Activated B cell treated with CpG ODN at 0.5 μM for 24 hours (primary cell): ENCODE measurements at regions of chr10 and their contacts with region 1.

Region 1: DNA sequence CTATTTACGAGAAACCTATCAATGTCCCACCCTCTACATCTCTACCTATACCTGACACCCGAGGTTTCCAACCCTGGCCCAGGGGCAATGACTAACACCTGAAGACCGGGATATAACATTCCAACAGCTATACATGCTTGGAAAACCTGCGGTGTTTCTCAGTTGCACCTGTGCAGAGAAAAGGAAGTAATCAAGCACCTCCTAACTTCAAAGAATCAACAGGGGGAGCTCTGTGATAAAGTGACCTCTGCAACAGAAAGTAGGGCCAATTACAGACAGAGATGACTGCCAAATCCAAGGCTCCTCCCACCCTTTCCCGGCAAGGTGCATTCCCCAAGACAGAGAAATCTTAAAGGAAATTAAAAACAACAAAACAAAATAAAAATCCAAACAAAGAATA is 41.3 kb downstream of the CCDC6 start:
- DNase-seq: no peak
- ATAC-seq: peak; percentile 76
- H3K4me3 Mint-ChIP-seq: no peak overlapping the region
- H3K27ac Mint-ChIP-seq: peak overlapping the region; percentile 82
- H3K4me1 Mint-ChIP-seq: peaks cover 69% of the 10 kb centered on the region
- H3K27me3 Mint-ChIP-seq: no peaks in the 10 kb centered on the region
- CTCF ChIP-seq: no peak

Region 2: DNA sequence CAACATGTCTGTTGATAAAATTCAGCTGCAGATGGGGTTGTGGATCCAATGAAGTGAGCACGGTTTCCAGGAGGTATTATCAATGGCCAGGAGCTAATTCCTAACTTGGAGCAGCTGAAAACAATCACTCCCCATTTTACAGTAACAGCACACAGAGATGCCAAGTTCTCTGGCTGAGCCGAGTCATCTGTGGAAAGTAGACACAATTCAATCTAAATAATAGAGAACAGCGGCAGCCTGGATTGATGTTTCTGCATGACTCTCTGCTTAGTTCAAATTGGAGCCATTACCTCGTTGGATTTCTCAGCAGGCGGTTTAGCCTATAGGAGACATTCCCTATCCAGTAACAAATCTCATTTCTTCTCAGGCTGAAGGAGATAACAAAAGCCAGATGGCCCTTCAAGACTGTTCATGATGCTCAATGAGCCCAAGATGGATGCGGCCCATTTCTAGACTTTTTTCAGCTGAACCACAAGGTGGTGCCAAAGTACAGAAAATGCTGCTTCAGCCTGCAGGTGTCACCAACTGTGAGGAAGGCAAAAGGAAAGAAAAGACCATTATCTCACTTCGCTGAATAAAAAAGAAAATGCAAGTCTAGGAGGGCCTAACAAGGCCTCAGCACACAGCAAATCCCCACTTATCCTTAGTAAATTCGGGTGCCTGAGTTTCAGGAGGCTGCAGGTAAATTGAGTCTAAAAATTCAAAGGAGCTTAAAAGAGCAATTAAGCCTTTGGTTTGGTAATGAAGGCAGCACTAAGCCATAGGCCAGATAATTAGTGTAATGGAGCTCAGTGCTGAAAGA is 239.2 kb before region 1 on chr10:
- CTCF ChIA-PET with region 1: interaction called, 6 read pairs
- POLR2A ChIA-PET with region 1: no interaction called
- intact Hi-C with region 1: loop called (anchors 1 kb)
- DNase-seq: no peak
- ATAC-seq: peak; percentile 85
- H3K4me3 Mint-ChIP-seq: no peak overlapping the region
- H3K27ac Mint-ChIP-seq: no peak overlapping the region
- H3K4me1 Mint-ChIP-seq: peaks cover 3% of the 10 kb centered on the region
- H3K27me3 Mint-ChIP-seq: no peaks in the 10 kb centered on the region
- CTCF ChIP-seq: peak; percentile 42

Region 3: GRCh38 chr10:59830601-59831259 is 34.4 kb before region 1 on chr10:
- CTCF ChIA-PET with region 1: interaction called, 8 read pairs
- POLR2A ChIA-PET with region 1: interaction called, 4 read pairs
- intact Hi-C with region 1: loop called (anchors 2 kb)
- DNase-seq: no peak
- ATAC-seq: peak; percentile 50
- H3K4me3 Mint-ChIP-seq: no peak overlapping the region
- H3K27ac Mint-ChIP-seq: no peak overlapping the region
- H3K4me1 Mint-ChIP-seq: peaks cover 69% of the 10 kb centered on the region
- H3K27me3 Mint-ChIP-seq: no peaks in the 10 kb centered on the region
- CTCF ChIP-seq: peak; percentile 21

Region 4: DNA sequence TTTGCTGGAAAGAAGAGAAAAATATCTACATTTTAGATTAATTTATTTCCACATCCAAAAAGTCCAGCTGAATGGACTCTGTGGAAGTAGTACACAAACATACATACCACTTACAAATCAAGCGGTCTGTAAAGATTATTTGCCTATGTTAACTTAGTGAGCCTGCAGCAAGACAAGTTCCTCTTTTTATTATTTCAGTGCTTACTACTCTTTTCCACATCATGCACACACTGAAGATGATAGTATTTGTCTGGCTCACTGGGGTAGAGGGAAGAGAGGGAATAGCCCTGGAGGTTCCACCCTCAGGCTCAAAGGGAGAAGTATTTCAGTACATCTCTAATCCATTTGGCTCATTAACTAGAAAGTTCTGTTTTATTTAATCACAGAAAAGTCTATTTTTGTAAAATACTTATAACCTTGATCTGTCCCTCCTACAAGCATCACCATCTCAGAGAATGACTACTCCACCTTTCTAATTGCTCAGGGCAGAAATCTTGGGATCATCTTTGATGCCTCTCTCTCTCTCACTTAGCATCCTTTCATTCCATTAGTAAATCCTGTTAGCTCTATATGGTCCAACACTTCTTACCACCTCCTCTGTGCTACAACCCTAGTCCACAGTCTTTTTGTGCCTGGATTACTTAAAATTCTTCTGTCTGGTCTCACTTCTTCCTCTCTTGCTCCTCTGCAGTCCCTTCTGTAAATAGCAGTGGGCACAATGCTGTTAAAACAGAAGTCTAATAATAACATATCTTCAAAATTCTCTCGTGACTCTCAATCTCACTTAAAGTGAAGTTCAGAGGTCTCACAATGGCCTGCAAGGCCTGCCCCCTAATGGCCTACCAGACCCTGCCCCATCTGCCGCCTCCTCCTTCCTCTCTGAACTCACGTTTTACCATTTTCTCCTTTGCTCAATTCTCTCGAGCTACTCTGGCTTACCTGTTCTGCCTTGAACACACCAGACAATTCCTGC is 105.6 kb after region 1 on chr10:
- CTCF ChIA-PET with region 1: interaction called, 11 read pairs
- POLR2A ChIA-PET with region 1: no interaction called
- intact Hi-C with region 1: loop called (anchors 2 kb)
- DNase-seq: no peak
- ATAC-seq: peak; percentile 83
- H3K4me3 Mint-ChIP-seq: no peak overlapping the region
- H3K27ac Mint-ChIP-seq: no peak overlapping the region
- H3K4me1 Mint-ChIP-seq: peaks cover 5% of the 10 kb centered on the region
- H3K27me3 Mint-ChIP-seq: no peaks in the 10 kb centered on the region
- CTCF ChIP-seq: no peak

Region 5: DNA sequence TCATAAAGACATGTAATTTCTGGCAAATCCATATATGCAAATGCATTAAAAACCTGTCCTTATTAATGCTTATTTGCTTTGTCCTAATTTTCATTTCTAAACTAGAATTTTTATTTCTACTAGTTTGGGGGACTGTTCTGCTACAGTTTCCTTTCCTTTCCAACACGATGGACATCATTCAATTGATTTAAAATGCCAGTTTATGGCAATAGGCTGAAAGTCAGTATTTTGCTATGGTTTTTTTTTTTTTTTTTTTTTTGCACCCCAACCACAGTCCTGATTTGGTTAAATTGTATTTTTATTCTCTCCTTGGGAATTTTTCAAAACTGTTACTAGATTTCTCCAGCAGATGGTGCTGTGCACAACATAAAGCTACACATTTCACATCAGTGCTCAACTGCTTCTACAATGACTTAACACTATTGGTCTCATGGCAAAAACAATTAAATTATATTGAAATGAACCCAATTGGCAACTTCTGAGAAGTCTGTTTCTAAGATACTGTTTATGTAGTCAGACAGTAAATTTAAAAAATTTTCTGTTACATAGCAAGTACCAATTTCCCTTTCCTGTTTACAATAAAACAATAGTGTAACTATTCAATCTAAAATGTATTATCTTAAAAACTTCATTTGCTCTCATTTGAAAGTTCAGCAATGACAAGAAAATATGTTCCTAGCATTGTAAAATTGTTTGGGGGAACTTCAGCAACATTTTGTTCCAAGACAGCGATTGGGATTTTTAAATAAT is 235.1 kb after region 1 on chr10:
- CTCF ChIA-PET with region 1: interaction called, 4 read pairs
- POLR2A ChIA-PET with region 1: no interaction called
- intact Hi-C with region 1: loop called (anchors 1 kb)
- DNase-seq: no peak
- ATAC-seq: no peak
- H3K4me3 Mint-ChIP-seq: no peak overlapping the region
- H3K27ac Mint-ChIP-seq: no peak overlapping the region
- H3K4me1 Mint-ChIP-seq: no peaks in the 10 kb centered on the region
- H3K27me3 Mint-ChIP-seq: no peaks in the 10 kb centered on the region
- CTCF ChIP-seq: peak; percentile 70

Region 6: GRCh38 chr10:60521974-60522405 is 656.9 kb after region 1 on chr10:
- CTCF ChIA-PET with region 1: no interaction called
- POLR2A ChIA-PET with region 1: no interaction called
- intact Hi-C with region 1: no loop called
- DNase-seq: no peak
- ATAC-seq: no peak
- H3K4me3 Mint-ChIP-seq: no peak overlapping the region
- H3K27ac Mint-ChIP-seq: no peak overlapping the region
- H3K4me1 Mint-ChIP-seq: no peaks in the 10 kb centered on the region
- H3K27me3 Mint-ChIP-seq: no peaks in the 10 kb centered on the region
- CTCF ChIP-seq: no peak